K562 (cell line): ENCODE measurements at regions of chr22 and their contacts with region 1.

Region 1: DNA sequence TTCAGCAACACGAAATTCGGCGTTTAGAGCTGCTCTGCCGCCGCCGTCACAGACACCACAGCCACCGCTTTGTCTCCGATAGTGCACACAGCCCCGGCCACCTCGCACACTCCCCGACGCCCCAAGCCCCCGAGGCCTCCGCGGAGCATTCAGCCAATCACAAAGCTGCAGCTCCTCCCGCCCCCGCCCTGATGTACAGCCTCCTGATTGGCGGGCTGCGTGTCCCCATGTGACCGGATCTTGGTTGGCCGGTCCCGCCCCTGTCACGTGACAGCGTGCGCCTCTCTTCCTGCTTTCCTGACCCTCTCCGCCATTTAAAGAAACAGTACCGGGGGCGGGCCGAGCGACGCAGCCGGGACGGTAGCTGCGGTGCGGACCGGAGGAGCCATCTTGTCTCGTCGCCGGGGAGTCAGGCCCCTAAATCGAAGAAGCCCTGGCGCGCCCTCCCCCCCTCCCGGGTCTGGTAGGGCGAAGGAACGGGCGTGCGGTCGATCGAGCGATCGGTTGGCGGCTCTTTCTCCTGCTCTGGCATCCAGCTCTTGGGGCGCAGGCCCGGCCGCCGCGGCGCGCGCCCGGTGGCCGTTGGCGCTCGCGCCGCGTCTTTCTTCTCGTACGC is at the start of gene TUG1:
- DNase-seq: peak; percentile 94 to 98 (median 96)
- ATAC-seq: peak; percentile 90
- H3K4me3 ChIP-seq: peak within 1 kb of the TSS; percentile 90
- H3K27ac ChIP-seq: peak within 1 kb of the TSS; percentile 92
- H3K4me1 ChIP-seq: peaks cover 9 to 17% of the 10 kb centered on the region in 2 experiments; a peak in 4 of 5 replicates
- H3K27me3 ChIP-seq: no peaks in the 10 kb centered on the region
- CTCF ChIP-seq: no peak
- EP300 ChIP-seq: 0 out of 2 replicates have a peak, but pooled peaks have one; percentile 3
- POLR2A ChIP-seq: peak; percentile 77
- RAD21 ChIP-seq: no peak
- polyA plus RNA-seq, gene TUG1: 24.7 to 25.0 TPM

Region 2: DNA sequence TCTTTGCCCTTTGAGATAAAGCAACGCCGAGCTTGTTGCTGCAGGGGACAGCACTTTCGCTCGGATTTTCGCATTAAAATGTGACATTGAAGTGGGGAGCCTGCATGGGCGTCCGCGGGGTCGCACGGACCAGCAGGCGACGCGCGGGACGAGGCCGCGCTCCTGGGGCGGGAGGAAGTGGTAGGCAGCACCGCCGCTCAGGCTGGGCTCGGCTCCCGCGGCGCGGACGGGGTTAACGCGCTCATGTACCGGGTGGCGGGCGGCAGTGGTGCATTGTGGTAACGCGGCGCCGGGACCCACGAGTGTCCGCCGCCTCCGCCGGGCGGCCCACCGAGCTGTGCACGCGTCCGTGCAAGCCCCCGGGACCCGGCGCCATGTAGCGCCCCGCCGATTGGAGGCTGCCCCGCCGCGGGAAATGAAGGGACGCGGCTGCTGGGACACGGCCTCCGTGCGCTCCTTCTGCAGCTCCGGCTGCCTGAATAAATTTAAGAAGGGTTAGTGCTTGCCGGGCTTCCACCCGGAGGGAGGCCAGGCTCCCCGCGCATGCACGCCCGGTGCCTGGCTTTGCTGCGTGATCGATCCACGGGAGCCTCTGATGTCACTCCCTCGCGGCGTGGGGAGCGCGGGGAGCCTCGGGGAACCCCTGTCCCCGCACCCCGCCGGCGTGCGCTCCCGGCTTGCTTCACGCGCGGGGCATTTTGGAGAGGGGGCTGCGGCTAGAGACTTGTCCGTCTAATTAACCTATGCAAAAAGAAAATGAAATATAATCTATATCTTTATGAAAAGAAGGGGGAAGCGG is 146.6 kb before region 1 on chr22:
- CTCF ChIA-PET with region 1: no interaction called
- POLR2A ChIA-PET with region 1: no interaction called
- in situ Hi-C with region 1: no loop called
- intact Hi-C with region 1: no loop called
- DNase-seq: peak in 2 of 4 experiments; percentile 14 to 20
- ATAC-seq: no peak; the same call in 2 of the 3 replicates
- H3K4me3 ChIP-seq: no peak overlapping the region
- H3K27ac ChIP-seq: no peak overlapping the region
- H3K4me1 ChIP-seq: peaks cover 0 to 13% of the 10 kb centered on the region in 2 experiments; a peak in 2 of 5 replicates
- H3K27me3 ChIP-seq: peaks cover 33 to 60% of the 10 kb centered on the region in 2 experiments
- CTCF ChIP-seq: no peak
- EP300 ChIP-seq: no peak
- POLR2A ChIP-seq: no peak
- RAD21 ChIP-seq: no peak

Region 3: GRCh38 chr22:30843245-30843644 is 125.8 kb before region 1 on chr22:
- CTCF ChIA-PET with region 1: no interaction called
- POLR2A ChIA-PET with region 1: no interaction called
- in situ Hi-C with region 1: no loop called
- intact Hi-C with region 1: no loop called
- DNase-seq: no peak
- ATAC-seq: no peak
- H3K4me3 ChIP-seq: no peak overlapping the region
- H3K27ac ChIP-seq: no peak overlapping the region
- H3K4me1 ChIP-seq: no peaks in the 10 kb centered on the region; a peak in 1 of 5 replicates
- H3K27me3 ChIP-seq: no peaks in the 10 kb centered on the region
- CTCF ChIP-seq: no peak
- EP300 ChIP-seq: no peak
- POLR2A ChIP-seq: no peak
- RAD21 ChIP-seq: no peak

Region 4: GRCh38 chr22:30979932-30980331 is 10.9 kb after region 1 on chr22:
- CTCF ChIA-PET with region 1: no interaction called
- POLR2A ChIA-PET with region 1: interaction called, 11 read pairs
- in situ Hi-C with region 1: no loop called
- intact Hi-C with region 1: no loop called
- DNase-seq: no peak
- ATAC-seq: no peak
- H3K4me3 ChIP-seq: no peak overlapping the region
- H3K27ac ChIP-seq: no peak overlapping the region
- H3K4me1 ChIP-seq: no peaks in the 10 kb centered on the region
- H3K27me3 ChIP-seq: no peaks in the 10 kb centered on the region; a peak in 1 of 5 replicates
- CTCF ChIP-seq: no peak
- EP300 ChIP-seq: no peak
- POLR2A ChIP-seq: no peak
- RAD21 ChIP-seq: no peak

Region 5: DNA sequence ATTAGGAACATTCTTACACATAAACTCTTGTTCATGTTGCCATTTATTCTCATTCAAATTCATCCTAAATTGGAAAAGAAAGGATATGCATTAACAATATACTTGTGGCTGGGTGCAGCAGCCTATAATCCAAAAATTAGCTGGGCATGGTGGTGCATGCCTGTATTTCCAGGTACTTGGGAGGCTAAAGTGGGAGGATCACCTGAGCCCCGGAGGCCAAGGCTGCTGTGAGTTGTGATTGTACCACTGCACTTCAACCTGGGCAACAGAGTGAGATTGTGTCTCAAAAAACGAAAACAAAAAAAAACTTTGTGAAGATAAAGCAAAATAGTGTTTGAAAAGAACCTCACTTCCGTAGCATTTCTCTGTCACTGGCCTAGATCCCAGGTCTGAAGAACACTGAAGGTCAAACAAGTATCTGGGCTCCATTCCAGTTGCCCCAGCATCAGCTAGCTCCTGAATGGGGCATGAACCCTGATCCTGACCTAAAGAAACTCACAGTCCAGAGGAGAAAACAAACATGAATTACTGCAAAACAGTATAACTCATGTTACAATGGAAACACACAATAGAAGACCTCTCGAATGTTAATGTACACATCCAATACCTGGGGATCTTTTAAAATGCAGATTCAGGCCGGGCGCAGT is 32.2 kb after region 1 on chr22:
- CTCF ChIA-PET with region 1: no interaction called
- POLR2A ChIA-PET with region 1: no interaction called
- in situ Hi-C with region 1: no loop called
- intact Hi-C with region 1: no loop called
- DNase-seq: no peak
- ATAC-seq: no peak
- H3K4me3 ChIP-seq: no peak overlapping the region
- H3K27ac ChIP-seq: no peak overlapping the region
- H3K4me1 ChIP-seq: peaks cover 0 to 3% of the 10 kb centered on the region in 2 experiments; a peak in 3 of 5 replicates
- H3K27me3 ChIP-seq: no peaks in the 10 kb centered on the region
- CTCF ChIP-seq: no peak
- EP300 ChIP-seq: no peak
- POLR2A ChIP-seq: no peak
- RAD21 ChIP-seq: no peak

Region 6: DNA sequence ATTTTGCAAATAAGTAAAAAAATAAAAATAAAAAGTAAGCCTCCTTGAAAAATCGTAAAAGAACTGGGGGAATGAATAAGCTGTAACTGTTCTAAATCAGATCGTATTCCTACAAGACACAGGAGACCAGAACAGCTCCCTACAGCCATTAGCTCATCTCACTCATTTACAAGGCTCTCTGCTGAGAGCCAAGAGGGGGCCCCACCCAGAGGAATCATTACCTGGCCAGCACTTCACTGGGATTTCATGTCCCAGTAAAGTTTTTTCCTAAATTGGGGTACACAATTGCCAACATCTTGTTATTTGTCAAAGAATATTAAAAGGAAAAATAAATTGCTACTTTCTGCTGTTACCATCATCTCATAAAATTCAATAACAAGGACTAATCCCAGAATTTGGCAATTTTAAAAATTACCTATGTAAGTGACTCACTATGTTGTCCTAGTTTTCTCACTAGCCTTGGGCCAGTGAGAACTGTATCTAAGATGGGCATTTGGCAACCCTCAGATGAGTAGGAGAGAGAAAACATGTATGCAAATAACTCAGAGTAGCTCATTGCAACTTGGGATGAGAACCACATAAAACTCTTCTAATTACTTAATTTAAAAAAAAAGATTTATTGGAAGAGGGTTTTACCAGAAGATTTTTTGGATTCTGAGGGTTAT is 93.7 kb after region 1 on chr22:
- CTCF ChIA-PET with region 1: no interaction called
- POLR2A ChIA-PET with region 1: interaction called, 4 read pairs
- in situ Hi-C with region 1: no loop called
- intact Hi-C with region 1: loop called (anchors 5 kb)
- DNase-seq: no peak
- ATAC-seq: no peak
- H3K4me3 ChIP-seq: no peak overlapping the region
- H3K27ac ChIP-seq: no peak overlapping the region
- H3K4me1 ChIP-seq: peaks cover 14 to 15% of the 10 kb centered on the region in 2 experiments; a peak in 3 of 5 replicates
- H3K27me3 ChIP-seq: no peaks in the 10 kb centered on the region
- CTCF ChIP-seq: no peak
- EP300 ChIP-seq: no peak
- POLR2A ChIP-seq: no peak
- RAD21 ChIP-seq: no peak